K562 (cell line): ENCODE measurements at regions of chr5 and their contacts with region 1.

Region 1: DNA sequence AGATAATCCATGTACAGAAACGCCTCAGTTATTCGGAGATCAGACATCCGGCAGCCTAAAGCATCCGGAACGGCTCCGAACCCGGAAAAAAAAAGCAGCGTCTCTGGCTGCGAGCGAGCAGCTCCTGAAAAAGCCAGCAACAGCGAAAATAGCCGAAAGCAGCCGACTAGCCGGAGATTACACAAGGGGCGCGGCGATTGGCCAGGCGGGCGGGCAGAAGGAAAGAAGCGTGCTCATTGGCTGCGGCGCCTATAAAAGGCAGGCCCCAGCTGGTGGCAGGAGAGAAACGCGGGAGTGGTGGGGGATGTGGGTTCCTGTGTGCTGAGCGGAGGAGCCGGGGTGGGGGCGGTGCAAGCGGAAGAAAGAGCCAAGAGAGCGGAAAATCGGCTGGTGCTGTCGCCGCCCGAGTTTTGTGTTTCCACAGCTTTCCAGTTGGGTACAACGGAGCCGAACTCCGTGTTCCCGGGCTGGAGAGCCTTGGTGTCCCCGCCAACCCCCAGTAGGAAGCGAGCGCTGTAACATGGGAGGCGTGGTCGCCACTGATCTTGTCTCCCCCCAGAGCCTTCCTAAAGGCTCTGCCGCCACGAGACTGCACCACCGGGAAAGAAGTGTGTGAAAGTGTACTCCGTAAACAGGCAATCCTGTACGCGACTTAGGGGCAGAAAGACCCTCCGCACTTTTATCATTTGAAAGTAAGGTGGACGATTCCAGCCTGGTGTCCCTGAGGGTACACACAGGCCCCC is at the start of gene ARL15:
- DNase-seq: peak; percentile 97 to 99 (median 98)
- ATAC-seq: peak; percentile 73
- H3K4me3 ChIP-seq: peak within 1 kb of the TSS; percentile 75
- H3K27ac ChIP-seq: peak within 1 kb of the TSS; percentile 94
- H3K4me1 ChIP-seq: peaks cover 8 to 37% of the 10 kb centered on the region in 2 experiments
- H3K27me3 ChIP-seq: no peaks in the 10 kb centered on the region
- CTCF ChIP-seq: no peak
- EP300 ChIP-seq: no peak
- POLR2A ChIP-seq: peak; percentile 100
- RAD21 ChIP-seq: peak in 1 of 2 experiments; percentile 27; a peak in 1 of 4 replicates
- polyA plus RNA-seq, gene ARL15: 18.5 to 22.4 TPM

Region 2: DNA sequence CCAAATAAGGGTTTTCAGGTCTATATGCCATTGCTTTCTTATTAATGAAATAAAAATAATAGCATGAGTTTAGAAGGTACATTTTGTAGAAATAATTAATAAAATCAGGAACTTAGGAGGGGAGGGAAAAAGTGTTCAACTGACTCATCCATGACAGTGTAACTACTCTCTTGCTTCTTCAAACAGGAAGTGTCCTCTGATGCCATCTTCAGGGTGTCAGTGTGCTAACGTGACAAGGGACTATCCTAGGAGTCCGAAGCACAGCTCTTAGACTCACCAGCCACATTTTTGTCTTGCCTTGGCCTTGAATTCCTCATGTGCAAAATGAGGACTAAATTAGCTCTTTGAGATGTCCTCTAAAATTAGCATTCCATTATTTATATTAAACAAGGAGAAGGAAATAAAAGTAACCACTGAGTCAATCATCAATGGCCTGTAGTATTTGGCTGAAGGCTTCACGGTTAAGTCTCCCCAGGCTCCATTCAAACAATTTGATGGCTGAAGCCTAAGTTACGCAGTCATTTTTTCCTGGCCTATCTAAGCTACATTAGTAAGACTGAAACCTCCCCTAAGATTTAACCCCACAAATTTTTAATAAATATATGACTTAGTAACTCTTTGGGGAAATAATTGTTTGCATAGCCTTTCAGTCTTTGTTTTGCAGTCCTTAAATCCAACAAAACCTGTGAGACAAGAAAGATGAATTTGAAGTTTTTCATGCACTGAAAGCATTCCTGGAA is 151.3 kb before region 1 on chr5:
- CTCF ChIA-PET with region 1: no interaction called
- POLR2A ChIA-PET with region 1: no interaction called
- in situ Hi-C with region 1: loop called (anchors 10 kb)
- intact Hi-C with region 1: loop called (anchors 5 kb)
- DNase-seq: peak; percentile 17 to 61 (median 36)
- ATAC-seq: peak; percentile 86
- H3K4me3 ChIP-seq: no peak overlapping the region
- H3K27ac ChIP-seq: peak overlapping the region; percentile 4; the same call in 1 of the 3 replicates
- H3K4me1 ChIP-seq: peaks cover 0 to 12% of the 10 kb centered on the region in 2 experiments; a peak in 2 of 5 replicates
- H3K27me3 ChIP-seq: no peaks in the 10 kb centered on the region
- CTCF ChIP-seq: peak in 2 of 3 experiments; percentile 17 to 41; a peak in 2 of 6 replicates
- EP300 ChIP-seq: no peak
- POLR2A ChIP-seq: no peak
- RAD21 ChIP-seq: peak; percentile 13 to 53; a peak in 2 of 4 replicates

Region 3: GRCh38 chr5:54254482-54255198 is 56.0 kb before region 1 on chr5:
- CTCF ChIA-PET with region 1: no interaction called
- POLR2A ChIA-PET with region 1: interaction called, 12 read pairs
- in situ Hi-C with region 1: no loop called
- intact Hi-C with region 1: no loop called
- DNase-seq: peak in 1 of 4 experiments; percentile 28
- ATAC-seq: peak; percentile 64
- H3K4me3 ChIP-seq: no peak overlapping the region
- H3K27ac ChIP-seq: no peak overlapping the region; the same call in 2 of the 3 replicates
- H3K4me1 ChIP-seq: peaks cover 6 to 27% of the 10 kb centered on the region in 2 experiments
- H3K27me3 ChIP-seq: no peaks in the 10 kb centered on the region
- CTCF ChIP-seq: peak; percentile 13 to 38 (median 33); a peak in 3 of 6 replicates
- EP300 ChIP-seq: no peak
- POLR2A ChIP-seq: no peak
- RAD21 ChIP-seq: peak; percentile 31 to 51; a peak in 3 of 4 replicates

Region 4: GRCh38 chr5:54323495-54323894 is 12.9 kb after region 1 on chr5:
- CTCF ChIA-PET with region 1: no interaction called
- POLR2A ChIA-PET with region 1: interaction called, 78 read pairs
- in situ Hi-C with region 1: no loop called
- intact Hi-C with region 1: loop called (anchors 1 kb)
- DNase-seq: no peak
- ATAC-seq: no peak
- H3K4me3 ChIP-seq: no peak overlapping the region
- H3K27ac ChIP-seq: peak overlapping the region; percentile 95
- H3K4me1 ChIP-seq: peaks cover 12 to 79% of the 10 kb centered on the region in 2 experiments
- H3K27me3 ChIP-seq: no peaks in the 10 kb centered on the region
- CTCF ChIP-seq: no peak
- EP300 ChIP-seq: peak; percentile 74; the same call in 1 of the 2 replicates
- POLR2A ChIP-seq: no peak
- RAD21 ChIP-seq: no peak

Region 5: DNA sequence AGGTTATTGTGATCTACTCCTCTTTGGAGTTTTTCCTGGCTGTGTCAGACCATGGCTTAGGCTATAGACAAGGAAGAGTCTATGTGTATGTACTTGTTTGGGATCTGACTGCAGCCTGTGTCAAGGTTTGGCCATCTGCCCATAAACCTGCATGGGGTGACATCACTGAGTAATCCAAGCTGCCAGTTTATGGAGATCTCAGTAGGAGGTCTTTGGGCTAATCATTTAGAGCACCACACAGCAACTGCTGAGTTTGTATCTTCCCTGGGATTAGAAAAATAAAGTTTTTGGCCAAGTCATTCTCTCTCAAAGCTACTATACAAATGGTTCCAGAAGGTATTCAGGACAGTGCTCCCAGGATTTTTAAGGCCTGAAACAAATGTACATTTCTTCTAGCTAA is 79.4 kb after region 1 on chr5:
- CTCF ChIA-PET with region 1: no interaction called
- POLR2A ChIA-PET with region 1: interaction called, 5 read pairs
- in situ Hi-C with region 1: no loop called
- intact Hi-C with region 1: loop called (anchors 5 kb)
- DNase-seq: peak; percentile 75 to 90 (median 78)
- ATAC-seq: peak; percentile 85
- H3K4me3 ChIP-seq: no peak overlapping the region
- H3K27ac ChIP-seq: peak overlapping the region; percentile 86
- H3K4me1 ChIP-seq: peaks cover 0 to 50% of the 10 kb centered on the region in 2 experiments; a peak in 3 of 5 replicates
- H3K27me3 ChIP-seq: no peaks in the 10 kb centered on the region
- CTCF ChIP-seq: no peak
- EP300 ChIP-seq: no peak; the same call in 1 of the 2 replicates
- POLR2A ChIP-seq: no peak
- RAD21 ChIP-seq: no peak

Region 6: DNA sequence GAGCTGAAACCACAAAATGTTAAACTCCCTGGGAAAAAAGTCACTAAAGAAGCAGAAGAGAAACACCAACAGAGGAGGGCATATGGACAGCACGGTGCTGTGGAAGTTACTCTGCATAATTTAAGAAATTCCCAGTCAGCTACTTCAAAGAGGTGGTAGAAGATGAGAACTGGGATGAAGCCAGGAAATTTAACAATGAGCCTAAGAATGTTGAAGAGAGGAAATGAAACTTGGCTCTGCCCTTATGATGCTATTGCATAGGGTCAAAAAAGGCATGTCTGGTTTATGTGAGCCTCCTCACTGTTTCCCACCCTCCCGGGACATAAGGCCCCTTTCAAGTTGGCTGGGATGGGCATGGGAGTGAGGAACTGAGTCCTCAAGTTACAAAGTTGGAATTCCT is 181.6 kb after region 1 on chr5:
- CTCF ChIA-PET with region 1: no interaction called
- POLR2A ChIA-PET with region 1: interaction called, 6 read pairs
- in situ Hi-C with region 1: no loop called
- intact Hi-C with region 1: loop called (anchors 1 kb)
- DNase-seq: no peak
- ATAC-seq: no peak
- H3K4me3 ChIP-seq: no peak overlapping the region
- H3K27ac ChIP-seq: no peak overlapping the region
- H3K4me1 ChIP-seq: 0 out of 5 replicates have a peak, but pooled peaks cover 0 to 2% of the 10 kb centered on the region in 2 experiments
- H3K27me3 ChIP-seq: no peaks in the 10 kb centered on the region
- CTCF ChIP-seq: no peak
- EP300 ChIP-seq: no peak
- POLR2A ChIP-seq: no peak
- RAD21 ChIP-seq: no peak